ENCODE measurements at regions of chr19 and their contacts with region 1.

Region 1: DNA sequence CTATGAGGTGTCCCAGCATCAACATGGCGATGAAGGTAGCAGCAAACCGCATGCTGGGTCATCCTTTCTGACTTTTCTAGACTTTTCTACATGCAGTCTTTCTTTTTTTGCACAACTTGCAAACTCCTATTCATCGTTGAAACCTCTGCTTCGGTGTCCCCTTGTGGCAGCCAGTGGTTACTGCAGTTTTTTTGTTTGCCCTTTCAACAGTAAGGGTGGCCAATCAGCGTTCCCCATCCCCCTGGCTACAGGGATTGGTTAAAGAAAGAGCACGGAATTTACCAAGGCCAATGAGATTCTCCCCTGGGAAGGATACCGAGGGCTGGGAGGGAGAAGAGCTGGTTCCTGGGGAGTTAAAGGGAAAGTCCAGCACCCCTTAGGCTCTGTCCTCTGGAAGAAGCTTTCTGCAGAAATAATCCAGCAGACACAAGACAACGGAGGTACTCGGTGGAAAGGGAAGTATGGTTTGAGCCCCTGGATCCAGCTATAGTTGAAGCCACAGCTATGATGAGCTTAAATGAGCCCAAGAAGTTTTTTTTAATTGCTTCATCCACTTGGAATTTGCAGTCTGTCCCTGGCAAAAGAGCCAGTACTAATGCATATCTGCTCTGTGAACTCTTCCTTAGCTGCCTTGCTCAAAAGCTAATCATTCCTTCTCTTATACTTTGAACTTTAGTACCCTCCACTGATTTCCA is 5.6 kb upstream of the LSM4 start:
- DNase-seq: peak; percentile 94
- ATAC-seq: peak; percentile 99
- H3K4me3 ChIP-seq: peak overlapping the region; percentile 45 to 46
- H3K27ac ChIP-seq: peak overlapping the region; percentile 45
- H3K4me1 ChIP-seq: peaks cover 21 to 35% of the 10 kb centered on the region in 2 experiments
- H3K27me3 ChIP-seq: no peaks in the 10 kb centered on the region
- CTCF ChIP-seq: peak; percentile 90 to 97 (median 93); a peak in 5 of 6 replicates
- POLR2A ChIP-seq: peak; percentile 72
- RAD21 ChIP-seq: peak; percentile 91

Region 2: DNA sequence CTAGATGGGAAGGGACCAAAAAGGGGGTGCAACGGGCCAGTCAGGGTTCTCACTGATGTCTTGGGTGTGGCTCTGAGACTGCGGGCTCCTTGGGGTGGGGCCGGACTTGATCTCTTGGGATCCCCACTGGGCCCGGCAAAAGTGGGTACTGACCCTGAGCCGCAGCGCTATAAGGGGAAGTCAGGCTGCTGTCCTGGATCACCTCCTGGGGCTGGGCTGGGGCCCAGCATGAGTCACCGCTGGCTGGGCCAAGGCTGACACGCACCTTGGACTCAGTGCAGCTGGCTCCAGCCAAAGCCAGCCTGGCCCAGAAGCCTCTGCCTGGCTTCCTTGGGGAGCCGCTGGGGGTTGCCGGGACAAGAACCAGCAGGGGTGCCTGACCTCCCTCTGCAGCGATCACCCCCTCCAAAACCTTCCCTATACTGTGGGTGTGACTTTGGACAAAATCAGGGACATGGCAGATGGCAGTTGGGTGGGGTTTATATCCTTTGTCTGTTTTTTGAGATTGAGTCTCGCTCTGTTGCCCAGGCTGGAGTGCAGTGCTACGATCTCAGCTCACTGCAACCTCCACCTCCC is 53.6 kb before region 1 on chr19:
- CTCF ChIA-PET with region 1: interaction called, 76 read pairs
- POLR2A ChIA-PET with region 1: interaction called, 36 read pairs
- RAD21 ChIA-PET with region 1: interaction called, 3 to 8 read pairs
- intact Hi-C with region 1: loop called (anchors 1 kb)
- DNase-seq: no peak
- ATAC-seq: peak; percentile 82
- H3K4me3 ChIP-seq: peak overlapping the region; percentile 1 to 47; a peak in 3 of 4 replicates
- H3K27ac ChIP-seq: peak overlapping the region; percentile 92
- H3K4me1 ChIP-seq: peaks cover 57 to 72% of the 10 kb centered on the region in 2 experiments
- H3K27me3 ChIP-seq: no peaks in the 10 kb centered on the region
- CTCF ChIP-seq: no peak
- POLR2A ChIP-seq: no peak
- RAD21 ChIP-seq: no peak

Region 3: DNA sequence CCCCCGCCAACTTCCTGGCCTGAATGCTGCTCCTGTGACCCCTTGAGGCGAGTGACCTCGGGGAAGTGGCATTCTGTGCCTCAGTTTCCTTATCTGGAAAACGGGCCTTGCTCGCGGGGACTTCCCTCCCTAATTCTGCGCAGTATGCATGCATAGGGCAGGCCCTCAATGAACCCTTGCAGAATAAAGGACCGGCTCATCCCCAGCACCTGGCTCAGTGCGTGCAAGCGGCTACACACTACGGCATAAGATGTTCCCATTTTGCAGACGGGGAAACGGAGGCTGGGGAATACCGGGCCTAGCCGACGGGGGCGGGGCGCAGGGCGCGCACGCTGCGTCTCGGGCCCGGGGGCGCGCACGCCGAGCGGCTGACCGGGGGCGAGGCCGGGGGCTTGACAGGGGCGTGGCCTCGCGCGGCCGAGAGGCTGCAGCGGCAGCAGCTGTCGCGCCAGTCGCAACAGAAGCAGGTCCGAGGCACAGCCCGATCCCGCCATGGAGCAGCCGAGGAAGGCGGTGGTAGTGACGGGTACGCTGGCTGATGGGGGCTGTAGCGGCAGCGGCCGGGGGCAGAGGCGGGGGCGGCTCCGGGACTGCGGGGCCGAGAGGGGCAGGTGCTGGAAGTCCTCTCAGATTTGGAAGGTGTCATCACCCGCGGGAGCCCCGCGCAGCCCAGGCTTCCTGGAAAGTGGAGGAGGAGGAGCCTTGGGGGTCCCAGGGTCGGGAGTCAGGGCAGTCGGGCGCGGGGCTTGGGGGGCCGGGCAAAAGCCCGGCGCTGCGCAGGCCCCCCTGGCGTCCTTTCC is 11.9 kb after region 1 on chr19 and contains the start of gene PGPEP1:
- CTCF ChIA-PET with region 1: interaction called, 31 read pairs
- POLR2A ChIA-PET with region 1: interaction called, 6 read pairs
- RAD21 ChIA-PET with region 1: interaction called in 1 of 2 experiments, 3 read pairs
- intact Hi-C with region 1: no loop called
- DNase-seq: no peak
- ATAC-seq: peak; percentile 76
- H3K4me3 ChIP-seq: peak within 1 kb of the TSS; percentile 76 to 82
- H3K27ac ChIP-seq: peak within 1 kb of the TSS; percentile 67
- H3K4me1 ChIP-seq: peaks cover 25 to 63% of the 10 kb centered on the region in 2 experiments
- H3K27me3 ChIP-seq: no peaks in the 10 kb centered on the region
- CTCF ChIP-seq: no peak
- POLR2A ChIP-seq: no peak
- RAD21 ChIP-seq: no peak
- total RNA-seq, gene PGPEP1: 30.9 TPM

Region 4: DNA sequence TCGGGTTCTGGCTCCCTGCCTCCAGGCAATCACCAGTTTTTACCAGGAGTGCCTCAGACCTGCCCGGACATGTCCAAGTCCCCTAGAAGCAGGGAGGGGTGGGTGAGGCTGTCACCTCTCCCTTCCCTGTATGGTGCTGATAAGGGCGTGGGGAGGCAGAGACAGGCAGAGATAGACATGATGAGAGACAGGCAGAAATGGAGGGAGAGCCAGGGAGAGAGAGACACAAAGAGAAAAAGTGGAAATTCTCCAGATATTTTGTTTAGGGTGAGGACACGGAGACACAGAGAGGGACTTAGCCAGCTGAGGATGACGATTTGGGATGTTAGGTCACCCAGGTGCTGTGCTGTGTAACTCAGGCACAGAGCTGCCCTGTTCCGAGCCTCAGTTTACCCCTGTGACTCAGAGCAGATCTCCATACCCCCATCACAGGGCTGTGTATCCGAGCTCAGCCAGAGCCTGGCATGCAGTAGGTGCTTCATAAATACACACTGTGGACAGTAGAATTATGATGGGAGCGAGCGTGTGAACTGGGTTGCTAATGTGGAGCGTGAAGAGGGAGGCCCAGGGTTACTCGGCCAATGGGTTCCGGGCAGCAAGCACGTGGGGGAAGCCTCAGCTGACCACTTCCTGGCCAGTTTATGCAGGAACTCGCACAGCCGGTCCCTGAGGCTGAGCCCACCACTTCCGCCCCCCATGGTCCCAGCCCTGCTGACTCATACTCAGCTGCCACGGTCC is 45.6 kb after region 1 on chr19:
- CTCF ChIA-PET with region 1: no interaction called
- POLR2A ChIA-PET with region 1: no interaction called
- RAD21 ChIA-PET with region 1: no interaction called
- intact Hi-C with region 1: no loop called
- DNase-seq: peak; percentile 94
- ATAC-seq: peak; percentile 88
- H3K4me3 ChIP-seq: peak overlapping the region in 1 of 2 experiments; percentile 23; a peak in 3 of 4 replicates
- H3K27ac ChIP-seq: peak overlapping the region; percentile 92
- H3K4me1 ChIP-seq: peaks cover 61 to 64% of the 10 kb centered on the region in 2 experiments
- H3K27me3 ChIP-seq: no peaks in the 10 kb centered on the region
- CTCF ChIP-seq: no peak
- POLR2A ChIP-seq: no peak
- RAD21 ChIP-seq: no peak

Measured in HCT116 (cell line).